Right ventricle myocardium superior (tissue), 1 donor: ENCODE measurements at regions of chr10 and their contacts with region 1.

Region 1: DNA sequence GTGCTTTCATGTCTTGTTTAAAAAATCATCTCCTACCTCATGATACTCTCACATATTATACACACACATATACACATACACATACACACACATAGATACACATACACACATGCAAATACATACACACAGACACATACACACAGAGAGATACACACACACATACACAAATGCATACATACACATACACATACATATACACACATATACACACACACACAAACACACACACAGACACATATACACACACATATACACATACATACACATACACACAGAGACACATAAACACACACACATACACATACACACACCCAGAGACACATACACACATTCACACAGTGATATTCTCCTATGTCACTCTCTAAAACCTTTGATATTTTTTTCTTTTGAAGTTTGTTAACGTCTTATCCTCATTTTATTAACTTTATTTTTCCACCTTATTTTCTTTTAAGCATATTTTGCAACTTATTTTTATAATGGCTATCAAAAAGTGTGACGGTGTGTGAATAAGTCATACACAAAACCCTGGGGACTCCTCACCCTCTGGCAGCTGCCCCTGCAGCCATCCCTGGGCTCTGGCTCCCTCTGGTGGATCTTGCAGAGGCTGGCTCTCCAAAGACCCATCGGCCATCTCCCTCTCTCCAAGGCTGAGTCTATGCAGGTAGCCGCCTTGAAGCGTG is 3.9 kb upstream of the C10orf120 start:
- DNase-seq: peak; percentile 82
- ATAC-seq: peak; percentile 97

Region 2: DNA sequence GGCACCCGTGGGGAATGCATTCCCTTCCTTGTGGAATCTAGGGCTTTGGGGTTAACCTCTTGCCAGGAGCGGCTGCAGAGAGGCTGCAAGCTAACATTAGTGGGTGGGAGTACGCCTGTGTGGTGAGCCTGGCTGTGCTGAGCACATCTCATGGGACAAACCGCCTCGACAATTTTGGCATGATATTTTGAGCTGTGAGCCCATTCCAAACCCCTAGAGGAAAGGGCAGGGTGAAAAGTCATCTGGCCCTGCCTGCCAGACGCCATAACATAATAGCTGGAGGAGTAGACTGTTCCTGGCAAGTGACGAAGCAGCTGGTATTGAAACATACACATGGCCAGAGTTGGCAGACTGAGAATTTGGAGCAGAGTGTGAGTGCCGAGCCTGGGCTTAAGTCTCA is 604.7 kb before region 1 on chr10:
- intact Hi-C with region 1: no loop called
- DNase-seq: no peak
- ATAC-seq: peak; percentile 41

Region 3: DNA sequence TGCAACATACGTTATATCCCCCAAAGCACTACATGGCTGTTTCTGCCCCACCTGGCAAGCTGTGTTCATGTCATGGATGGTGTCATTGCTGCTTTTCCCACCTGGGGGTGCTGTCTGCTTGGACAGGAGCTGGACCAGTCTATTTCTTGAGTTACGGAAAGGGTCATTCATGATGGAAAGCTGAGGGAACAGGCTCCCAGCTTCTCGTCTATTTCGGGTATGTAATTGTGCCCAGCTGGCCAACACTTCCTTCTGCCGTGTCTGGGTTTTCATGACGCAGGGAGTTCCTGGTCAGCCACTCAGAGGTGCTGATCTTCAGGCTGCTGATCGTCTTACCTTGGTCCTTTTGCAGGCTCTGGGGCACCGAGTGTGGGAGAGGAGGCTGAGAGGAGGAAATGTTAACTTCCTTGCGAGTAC is 423.8 kb before region 1 on chr10:
- intact Hi-C with region 1: loop called (anchors 10 kb)
- DNase-seq: no peak
- ATAC-seq: peak; percentile 73

Region 4: GRCh38 chr10:122565728-122566206 is 137.8 kb before region 1 on chr10:
- intact Hi-C with region 1: loop called (anchors 5 kb)
- DNase-seq: peak; percentile 86
- ATAC-seq: peak; percentile 75

Region 5: DNA sequence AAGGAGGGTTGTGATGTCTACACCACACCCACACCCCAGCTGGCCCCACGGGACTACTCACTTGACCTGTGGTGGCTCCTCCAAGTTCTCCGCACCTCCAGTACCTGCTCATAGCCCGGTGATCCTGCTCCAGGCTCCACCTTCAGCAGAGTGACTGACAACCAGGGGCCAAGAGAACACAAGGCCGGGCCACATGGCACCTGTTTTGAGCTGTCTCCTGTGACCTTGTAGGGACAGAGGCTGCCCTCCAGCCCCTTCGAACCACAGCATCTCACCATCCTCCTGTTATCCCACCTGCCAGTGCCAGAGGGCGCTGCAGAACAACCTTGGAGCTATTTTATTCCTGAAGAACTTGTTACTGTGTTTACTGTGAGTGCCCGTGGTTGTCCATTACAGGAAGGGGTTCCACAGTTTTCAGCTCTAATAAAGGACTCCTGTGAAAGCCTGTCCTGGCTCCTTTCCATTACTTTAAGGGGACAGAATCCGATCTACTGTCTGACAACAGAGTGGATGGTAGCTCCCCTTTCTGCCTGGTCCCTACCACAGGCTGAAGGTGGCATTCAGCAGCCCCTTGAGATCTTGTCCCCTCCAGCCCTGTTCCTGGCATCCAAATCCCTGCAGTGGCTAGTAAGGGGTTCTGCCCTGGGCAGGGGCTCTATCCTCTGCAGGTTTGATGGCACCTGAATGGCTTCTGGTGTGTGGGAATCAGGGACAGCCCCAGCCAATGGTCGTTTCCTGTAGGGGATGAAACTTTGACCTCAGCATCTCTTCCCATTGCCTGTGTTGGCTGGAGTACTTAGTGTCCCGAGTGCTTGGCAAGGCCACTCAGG is 54.8 kb before region 1 on chr10:
- intact Hi-C with region 1: loop called (anchors 5 kb)
- DNase-seq: peak; percentile 68
- ATAC-seq: peak; percentile 87